Calu3 (cell line): ENCODE measurements at regions of chr6 and their contacts with region 1.

Region 1: DNA sequence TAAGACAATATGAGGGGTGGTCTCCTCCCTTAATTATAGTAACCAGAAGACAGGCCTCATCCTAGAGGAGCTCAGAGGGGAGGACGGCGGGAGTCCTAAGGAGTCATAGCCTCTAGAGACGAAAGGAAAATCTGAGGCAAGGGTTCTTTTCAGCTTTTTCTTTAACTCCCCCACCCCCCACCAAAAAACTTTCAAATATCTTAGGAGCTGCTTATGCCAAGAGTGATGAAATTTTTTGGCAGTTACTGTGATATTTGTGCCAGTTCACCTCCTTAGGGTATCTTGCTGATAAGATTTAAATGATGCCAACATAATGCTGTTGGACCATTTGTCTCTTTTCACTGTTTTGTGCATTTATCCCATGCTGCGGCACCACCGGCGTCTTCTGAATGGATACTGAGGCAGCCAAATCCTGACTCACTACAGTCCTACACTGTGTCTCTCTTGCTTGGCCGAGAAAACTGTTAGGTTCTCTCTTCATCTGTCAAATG is 44.5 kb upstream of the DSE start:
- DNase-seq: no peak
- H3K4me3 Mint-ChIP-seq: no peak overlapping the region
- H3K27ac Mint-ChIP-seq: no peak overlapping the region
- H3K4me1 Mint-ChIP-seq: no peaks in the 10 kb centered on the region
- H3K27me3 Mint-ChIP-seq: no peaks in the 10 kb centered on the region
- CTCF ChIP-seq: no peak

Region 2: DNA sequence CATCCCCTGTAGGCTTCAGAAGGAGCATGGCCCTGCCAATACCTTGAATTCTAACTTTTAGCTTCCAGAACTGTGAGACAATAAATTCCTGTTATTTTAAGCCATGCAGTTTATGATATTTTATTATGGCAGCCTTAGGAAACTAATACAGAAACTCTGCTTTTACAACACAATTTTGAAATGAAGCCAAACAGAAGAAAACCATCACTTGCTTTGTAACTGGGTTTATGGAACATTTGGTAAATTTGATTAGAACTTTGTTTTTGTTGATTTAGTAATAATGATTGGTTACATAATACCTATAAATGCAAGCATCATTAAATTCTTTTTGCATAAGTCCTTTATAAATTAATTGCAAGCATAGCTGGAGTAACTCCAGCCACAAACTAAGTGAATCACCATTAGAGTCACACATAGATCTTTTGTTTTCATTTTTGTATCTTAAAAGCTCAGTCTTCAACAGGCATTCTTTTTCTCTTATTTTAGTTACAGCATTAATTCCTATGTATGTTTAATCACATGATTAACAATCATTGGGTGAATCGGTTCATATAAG is 12.9 kb before region 1 on chr6:
- CTCF ChIA-PET with region 1: interaction called, 12 read pairs
- intact Hi-C with region 1: no loop called
- DNase-seq: no peak
- H3K4me3 Mint-ChIP-seq: no peak overlapping the region
- H3K27ac Mint-ChIP-seq: no peak overlapping the region
- H3K4me1 Mint-ChIP-seq: peaks cover 23% of the 10 kb centered on the region
- H3K27me3 Mint-ChIP-seq: no peaks in the 10 kb centered on the region
- CTCF ChIP-seq: no peak